ENCODE measurements at regions of chr18 and their contacts with region 1.

Region 1: DNA sequence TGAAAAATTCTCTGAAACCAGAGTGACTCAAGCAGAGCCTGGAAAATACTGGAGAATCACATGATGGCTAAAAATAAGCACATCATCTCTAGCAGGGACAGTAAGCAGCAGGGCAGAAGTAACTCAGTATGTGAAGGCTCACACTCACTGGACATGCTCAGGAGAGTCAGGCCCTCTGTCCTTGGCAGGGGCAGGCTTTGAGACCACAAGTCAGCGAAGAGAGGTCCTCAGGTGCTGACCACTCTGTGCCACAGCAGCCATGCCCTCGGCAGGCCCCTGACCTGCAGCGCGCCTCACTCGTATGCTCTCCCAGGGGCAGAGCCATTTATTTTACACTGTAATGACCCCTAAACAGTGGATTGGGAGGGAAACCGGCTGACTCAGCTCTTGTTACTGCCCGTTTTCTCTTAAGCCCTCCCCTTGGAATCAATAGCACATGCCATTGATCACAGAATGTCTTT is 76.8 kb downstream of the MAPRE2 start:
- DNase-seq: no peak
- H3K4me3 ChIP-seq: peak overlapping the region; percentile 10 to 13
- H3K27ac ChIP-seq: peak overlapping the region; percentile 73 to 78
- H3K4me1 ChIP-seq: peaks cover 0 to 64% (median 39%) of the 10 kb centered on the region in 4 donors
- H3K27me3 ChIP-seq: no peaks in the 10 kb centered on the region
- CTCF ChIP-seq: no peak

Region 2: DNA sequence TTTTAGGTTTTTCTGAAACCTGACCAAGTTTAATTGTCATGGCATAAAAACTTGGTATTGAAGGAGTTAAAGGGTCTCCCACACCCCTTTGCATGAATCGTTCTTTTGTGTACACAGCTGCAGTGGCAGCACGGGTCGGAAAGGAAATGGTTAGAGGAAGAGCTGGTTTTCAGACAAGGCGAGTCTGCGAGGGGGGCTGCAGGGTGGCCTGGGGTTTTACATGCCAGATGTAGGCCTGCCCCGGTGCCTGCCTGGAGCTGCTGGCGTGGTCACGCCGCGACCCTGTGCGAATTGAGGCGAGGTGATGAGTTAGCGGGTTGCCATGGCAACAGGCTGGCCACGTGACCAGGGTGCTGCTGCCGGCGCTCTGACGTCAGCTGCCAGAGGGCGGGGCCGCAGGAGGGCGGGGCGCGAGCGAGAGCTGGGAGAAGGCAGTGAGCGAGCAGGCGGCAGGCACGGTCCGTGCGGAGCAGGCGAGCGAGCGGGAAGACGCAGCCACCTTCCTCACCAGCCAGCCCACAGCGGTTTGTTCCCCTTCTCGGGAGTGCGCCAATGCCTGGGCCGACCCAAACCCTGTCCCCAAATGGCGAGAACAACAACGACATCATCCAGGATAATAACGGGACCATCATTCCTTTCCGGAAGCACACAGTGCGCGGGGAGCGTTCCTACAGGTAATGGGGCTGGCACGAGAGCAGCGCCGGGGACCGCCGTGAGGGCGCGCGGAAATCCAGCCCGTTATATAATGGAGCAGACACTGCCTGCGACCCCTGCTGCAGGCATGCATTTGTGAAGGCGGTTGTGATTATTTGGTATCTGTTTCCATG is 76.8 kb before region 1 on chr18 and contains the start of gene MAPRE2:
- intact Hi-C with region 1: loop called (anchors 10 kb)
- DNase-seq: peak; percentile 99 to 100
- H3K4me3 ChIP-seq: peak within 1 kb of the TSS; percentile 75 to 84
- H3K27ac ChIP-seq: peak within 1 kb of the TSS; percentile 73 to 83
- H3K4me1 ChIP-seq: peaks cover 0 to 41% (median 20%) of the 10 kb centered on the region in 4 donors
- H3K27me3 ChIP-seq: no peaks in the 10 kb centered on the region
- CTCF ChIP-seq: no peak

Measured in tibial artery (tissue), 4 donors.